Aorta (tissue), 5 donors: ENCODE measurements at regions of chr13 and their contacts with region 1.

Region 1: GRCh38 chr13:51814825-51815650 is 11.1 kb upstream of the DHRS12 start:
- DNase-seq: peak in 1 of 2 donors; percentile 68
- ATAC-seq: peak; percentile 78
- H3K4me3 ChIP-seq: no peak overlapping the region
- H3K27ac ChIP-seq: no peak overlapping the region
- H3K4me1 ChIP-seq: no peaks in the 10 kb centered on the region
- H3K27me3 ChIP-seq: no peaks in the 10 kb centered on the region

Region 2: GRCh38 chr13:52011632-52012511 is 196.8 kb after region 1 on chr13 and contains the start of gene ALG11:
- intact Hi-C with region 1: loop called in 1 of 2 experiments (anchors 10 kb)
- DNase-seq: peak; percentile 100
- ATAC-seq: peak; percentile 100
- H3K4me3 ChIP-seq: peak within 1 kb of the TSS; percentile 96 to 99
- H3K27ac ChIP-seq: no peak within 1 kb of the TSS
- H3K4me1 ChIP-seq: no peaks in the 10 kb centered on the region
- H3K27me3 ChIP-seq: no peaks in the 10 kb centered on the region
- total RNA-seq, gene ALG11: 29.9 to 32.5 TPM

Region 3: DNA sequence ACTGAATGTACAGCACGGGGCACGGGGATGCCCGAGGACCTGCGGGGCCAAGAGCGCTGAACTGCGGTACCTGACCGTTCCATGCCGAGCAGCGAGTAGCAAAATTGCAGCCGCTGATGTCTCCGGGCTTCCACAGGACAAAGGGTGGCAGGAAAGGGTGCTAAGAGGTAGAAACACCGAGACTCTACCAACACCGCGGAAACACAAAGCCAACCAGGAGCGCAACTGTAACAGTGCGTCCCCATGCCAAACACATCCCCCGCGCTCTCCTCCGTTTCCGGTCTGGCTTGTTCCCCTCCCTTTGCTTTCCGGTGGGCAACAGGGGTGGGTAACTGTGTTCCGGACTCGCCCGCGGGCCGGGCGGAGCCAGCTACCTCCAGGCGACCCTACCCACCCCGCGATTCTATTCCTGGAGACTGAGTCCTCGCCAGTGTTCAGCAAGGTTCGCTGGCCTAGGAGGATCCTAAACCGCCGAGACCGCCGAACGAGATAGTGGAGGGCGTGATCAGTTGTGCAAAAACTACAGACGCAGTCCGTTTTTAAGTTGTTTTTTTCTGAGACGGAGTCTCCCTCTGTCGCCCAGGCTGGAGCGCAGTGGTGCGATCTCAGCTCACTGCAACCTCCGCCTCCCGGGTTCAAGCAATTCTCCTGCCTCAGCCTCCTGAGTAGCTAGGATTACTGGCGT is 379.3 kb after region 1 on chr13:
- intact Hi-C with region 1: loop called in 1 of 2 experiments (anchors 10 kb)
- DNase-seq: peak; percentile 90 to 92
- ATAC-seq: peak; percentile 95
- H3K4me3 ChIP-seq: peak overlapping the region; percentile 56 to 70
- H3K27ac ChIP-seq: peak overlapping the region in 1 of 2 donors; percentile 49
- H3K4me1 ChIP-seq: no peaks in the 10 kb centered on the region
- H3K27me3 ChIP-seq: no peaks in the 10 kb centered on the region

Region 4: GRCh38 chr13:52644108-52644507 is 829.1 kb after region 1 on chr13:
- intact Hi-C with region 1: no loop called
- DNase-seq: no peak
- ATAC-seq: no peak
- H3K4me3 ChIP-seq: no peak overlapping the region
- H3K27ac ChIP-seq: no peak overlapping the region
- H3K4me1 ChIP-seq: no peaks in the 10 kb centered on the region
- H3K27me3 ChIP-seq: no peaks in the 10 kb centered on the region